Activated B cell treated with CpG ODN at 0.5 μM for 24 hours (primary cell): ENCODE measurements at regions of chr17 and their contacts with region 1.

Region 1: GRCh38 chr17:13337864-13338371 is 263.8 kb downstream of the HS3ST3A1 start:
- DNase-seq: no peak
- ATAC-seq: no peak
- H3K4me3 Mint-ChIP-seq: no peak overlapping the region
- H3K27ac Mint-ChIP-seq: no peak overlapping the region
- H3K4me1 Mint-ChIP-seq: no peaks in the 10 kb centered on the region
- H3K27me3 Mint-ChIP-seq: no peaks in the 10 kb centered on the region
- CTCF ChIP-seq: no peak

Region 2: DNA sequence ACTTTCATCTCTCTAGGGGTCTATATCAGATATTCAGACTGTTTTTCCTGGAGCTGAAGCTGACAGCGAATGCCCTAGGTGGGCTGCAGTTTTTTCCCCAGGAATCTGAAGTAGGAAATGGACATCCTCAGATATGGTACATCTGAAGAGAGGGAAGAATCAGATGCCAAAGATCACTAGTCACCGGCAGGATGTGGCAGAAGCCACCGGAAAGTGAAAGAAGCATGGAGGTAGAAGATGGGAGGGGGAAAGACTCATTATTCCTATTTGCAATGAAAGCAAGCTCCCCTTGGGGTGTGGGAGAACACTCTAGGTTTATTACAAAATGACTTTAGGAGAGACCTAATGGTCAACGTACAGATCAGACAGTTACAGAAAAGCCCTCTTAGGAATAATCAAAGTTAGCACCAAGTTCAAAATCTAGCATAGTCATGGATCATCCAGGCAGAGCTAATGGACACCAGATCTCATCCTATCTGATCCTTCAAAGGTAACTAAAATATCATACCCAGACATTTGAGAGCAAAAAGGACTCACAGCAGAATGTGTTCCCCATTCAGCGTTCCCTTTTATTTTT is 153.1 kb after region 1 on chr17:
- CTCF ChIA-PET with region 1: no interaction called
- POLR2A ChIA-PET with region 1: no interaction called
- intact Hi-C with region 1: no loop called
- DNase-seq: no peak
- ATAC-seq: no peak
- H3K4me3 Mint-ChIP-seq: no peak overlapping the region
- H3K27ac Mint-ChIP-seq: no peak overlapping the region
- H3K4me1 Mint-ChIP-seq: no peaks in the 10 kb centered on the region
- H3K27me3 Mint-ChIP-seq: peaks cover 2% of the 10 kb centered on the region
- CTCF ChIP-seq: no peak

Region 3: DNA sequence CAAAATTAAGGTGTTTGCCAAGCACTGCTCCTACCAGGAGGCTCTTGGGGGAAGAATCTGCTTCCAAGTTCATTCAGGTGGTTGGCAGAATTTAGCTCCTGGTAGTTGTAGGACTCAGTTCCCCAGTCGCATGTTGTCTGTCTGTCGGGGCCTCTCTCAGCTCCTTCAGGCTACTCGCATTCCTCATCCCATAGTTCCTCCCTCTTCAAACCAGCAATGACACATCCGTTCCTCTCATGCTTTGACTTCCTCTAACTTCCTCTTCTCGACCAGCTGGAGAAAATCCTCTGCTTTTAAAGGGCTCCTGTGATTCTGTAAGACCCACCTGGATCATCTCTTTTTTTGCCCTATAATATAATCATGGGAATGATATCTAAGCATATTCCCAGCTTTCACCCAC is 1819.1 kb after region 1 on chr17:
- CTCF ChIA-PET with region 1: no interaction called
- POLR2A ChIA-PET with region 1: no interaction called
- intact Hi-C with region 1: loop called (anchors 5 kb)
- DNase-seq: no peak
- ATAC-seq: no peak
- H3K4me3 Mint-ChIP-seq: no peak overlapping the region
- H3K27ac Mint-ChIP-seq: no peak overlapping the region
- H3K4me1 Mint-ChIP-seq: no peaks in the 10 kb centered on the region
- H3K27me3 Mint-ChIP-seq: peaks cover 23% of the 10 kb centered on the region
- CTCF ChIP-seq: no peak